ENCODE measurements at regions of chr9 and their contacts with region 1.

Region 1: GRCh38 chr9:112333639-112334431 is 416 bp upstream of the PTBP3 start:
- DNase-seq: peak; percentile 81
- H3K4me3 ChIP-seq: peak overlapping the region; percentile 81
- H3K27ac ChIP-seq: peak overlapping the region; percentile 90
- H3K27me3 ChIP-seq: no peaks in the 10 kb centered on the region
- CTCF ChIP-seq: peak; percentile 66

Region 2: DNA sequence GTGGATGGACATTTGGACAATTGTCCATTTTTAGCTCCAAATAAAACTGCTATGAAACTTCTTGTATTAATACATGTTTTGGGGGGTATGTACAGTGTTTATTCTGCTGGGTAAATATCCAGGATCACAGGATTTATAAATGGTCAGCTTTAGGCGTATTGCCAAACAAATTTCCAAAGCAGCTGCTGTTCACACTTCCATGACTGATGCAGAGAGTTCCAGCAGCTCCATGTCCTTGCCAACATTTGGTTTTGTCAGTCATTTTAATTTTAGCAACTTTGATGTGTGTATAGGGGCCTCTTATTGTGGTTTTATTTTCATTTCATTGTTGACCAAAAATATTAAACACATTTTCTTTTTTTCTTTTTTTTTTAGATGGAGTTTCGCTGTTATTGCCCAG is 148.9 kb before region 1 on chr9:
- CTCF ChIA-PET with region 1: no interaction called
- POLR2A ChIA-PET with region 1: interaction called, 11 read pairs
- DNase-seq: no peak
- H3K4me3 ChIP-seq: no peak overlapping the region
- H3K27ac ChIP-seq: no peak overlapping the region
- H3K27me3 ChIP-seq: no peaks in the 10 kb centered on the region
- CTCF ChIP-seq: no peak

Region 3: GRCh38 chr9:112322701-112323377 is 11.0 kb before region 1 on chr9:
- CTCF ChIA-PET with region 1: no interaction called
- POLR2A ChIA-PET with region 1: no interaction called
- DNase-seq: no peak
- H3K4me3 ChIP-seq: no peak overlapping the region
- H3K27ac ChIP-seq: no peak overlapping the region
- H3K27me3 ChIP-seq: no peaks in the 10 kb centered on the region
- CTCF ChIP-seq: no peak

Region 4: GRCh38 chr9:112379177-112380101 is 45.6 kb after region 1 on chr9:
- CTCF ChIA-PET with region 1: no interaction called
- POLR2A ChIA-PET with region 1: interaction called, 15 read pairs
- DNase-seq: peak; percentile 95
- H3K4me3 ChIP-seq: peak overlapping the region; percentile 91
- H3K27ac ChIP-seq: peak overlapping the region; percentile 97
- H3K27me3 ChIP-seq: no peaks in the 10 kb centered on the region
- CTCF ChIP-seq: no peak